ENCODE measurements at regions of chr15 and their contacts with region 1.

Region 1: GRCh38 chr15:33700695-33701304 is 267.5 kb upstream of the CHRM5 start:
- DNase-seq: peak; percentile 67 to 81
- H3K4me3 ChIP-seq: no peak overlapping the region
- H3K4me1 ChIP-seq: no peaks in the 10 kb centered on the region; the same call in 1 of the 2 replicates
- H3K27me3 ChIP-seq: peaks cover 2% of the 10 kb centered on the region; the same call in 1 of the 2 replicates

Region 2: DNA sequence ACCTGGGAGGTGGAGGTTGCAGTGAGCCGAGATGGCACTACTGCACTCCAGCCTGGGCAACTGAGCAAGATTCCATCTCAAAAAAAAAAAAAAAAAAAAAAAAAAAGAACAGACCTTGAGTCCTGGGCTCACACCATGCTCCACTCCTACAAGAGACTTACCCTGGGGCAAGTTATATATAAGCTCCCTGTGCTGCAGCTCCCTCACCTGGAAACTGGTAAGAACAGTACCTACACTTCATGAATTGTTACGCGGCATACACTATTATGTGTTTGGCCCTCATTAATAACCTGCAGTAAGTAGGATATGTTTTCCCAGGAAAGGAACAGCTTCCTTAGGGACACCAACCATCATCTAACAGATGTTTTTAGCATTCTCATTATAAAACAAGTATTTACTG is 625.9 kb before region 1 on chr15:
- in situ Hi-C with region 1: no loop called
- DNase-seq: no peak
- H3K4me3 ChIP-seq: no peak overlapping the region
- H3K4me1 ChIP-seq: no peaks in the 10 kb centered on the region
- H3K27me3 ChIP-seq: 0 out of 2 replicates have a peak, but pooled peaks cover 4% of the 10 kb centered on the region

Region 3: GRCh38 chr15:33292717-33293307 is 408.0 kb before region 1 on chr15:
- in situ Hi-C with region 1: loop called (anchors 5 kb)
- DNase-seq: peak; percentile 53 to 79
- H3K4me3 ChIP-seq: no peak overlapping the region
- H3K4me1 ChIP-seq: no peaks in the 10 kb centered on the region
- H3K27me3 ChIP-seq: no peaks in the 10 kb centered on the region; the same call in 1 of the 2 replicates

Region 4: DNA sequence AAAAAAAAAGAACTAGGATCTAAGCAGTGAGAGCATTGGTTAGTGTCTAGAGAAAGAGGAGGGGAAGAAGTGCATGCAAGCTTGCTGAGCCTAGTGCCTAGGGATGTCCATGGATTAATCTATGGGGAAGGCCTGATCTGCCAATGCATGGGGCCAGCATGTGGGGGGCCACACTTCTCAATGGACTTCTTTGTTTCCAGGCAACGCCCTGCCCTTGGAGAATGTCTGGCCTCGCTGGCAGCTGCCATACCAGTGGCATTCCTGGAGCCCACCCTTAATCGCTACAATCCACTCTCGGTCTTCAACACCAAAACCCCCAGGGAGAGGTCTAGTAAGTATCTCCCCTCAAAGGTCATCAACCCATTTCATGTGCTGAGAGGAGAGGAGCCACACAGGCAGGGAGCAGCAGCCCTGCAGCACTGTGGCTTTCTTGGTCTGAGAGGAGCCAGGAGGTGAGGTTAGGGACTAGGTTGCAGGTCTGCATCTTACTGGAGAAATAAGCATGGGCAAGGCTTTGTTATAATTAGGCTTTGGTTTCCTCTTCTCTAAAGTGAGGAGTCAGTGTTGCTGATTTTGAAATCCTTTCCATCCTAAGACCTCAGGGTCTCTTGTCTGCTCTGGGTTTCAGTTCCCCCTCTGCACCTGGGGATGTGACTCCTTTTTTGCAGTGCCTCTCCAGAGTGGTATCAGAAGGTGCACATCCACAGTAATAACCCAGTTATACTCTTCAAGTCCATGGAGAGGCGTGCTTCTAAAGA is 79.4 kb after region 1 on chr15:
- in situ Hi-C with region 1: no loop called
- DNase-seq: no peak
- H3K4me3 ChIP-seq: no peak overlapping the region
- H3K4me1 ChIP-seq: no peaks in the 10 kb centered on the region
- H3K27me3 ChIP-seq: peaks cover 4% of the 10 kb centered on the region; the same call in 1 of the 2 replicates

Region 5: GRCh38 chr15:33846867-33847266 is 146.1 kb after region 1 on chr15:
- in situ Hi-C with region 1: no loop called
- DNase-seq: no peak
- H3K4me3 ChIP-seq: no peak overlapping the region
- H3K4me1 ChIP-seq: peaks cover 5% of the 10 kb centered on the region
- H3K27me3 ChIP-seq: no peaks in the 10 kb centered on the region

Region 6: GRCh38 chr15:33858851-33859250 is 158.1 kb after region 1 on chr15:
- in situ Hi-C with region 1: no loop called
- DNase-seq: no peak
- H3K4me3 ChIP-seq: no peak overlapping the region
- H3K4me1 ChIP-seq: no peaks in the 10 kb centered on the region
- H3K27me3 ChIP-seq: no peaks in the 10 kb centered on the region